OCI-LY7 (cell line): ENCODE measurements at regions of chr19 and their contacts with region 1.

Region 1: GRCh38 chr19:42465827-42466280 is 23.1 kb upstream of the CXCL17 start:
- DNase-seq: peak; percentile 90
- H3K4me3 ChIP-seq: peak overlapping the region; percentile 41
- H3K27ac ChIP-seq: peak overlapping the region; percentile 96
- H3K4me1 ChIP-seq: peaks cover 85% of the 10 kb centered on the region
- CTCF ChIP-seq: peak; percentile 77

Region 2: DNA sequence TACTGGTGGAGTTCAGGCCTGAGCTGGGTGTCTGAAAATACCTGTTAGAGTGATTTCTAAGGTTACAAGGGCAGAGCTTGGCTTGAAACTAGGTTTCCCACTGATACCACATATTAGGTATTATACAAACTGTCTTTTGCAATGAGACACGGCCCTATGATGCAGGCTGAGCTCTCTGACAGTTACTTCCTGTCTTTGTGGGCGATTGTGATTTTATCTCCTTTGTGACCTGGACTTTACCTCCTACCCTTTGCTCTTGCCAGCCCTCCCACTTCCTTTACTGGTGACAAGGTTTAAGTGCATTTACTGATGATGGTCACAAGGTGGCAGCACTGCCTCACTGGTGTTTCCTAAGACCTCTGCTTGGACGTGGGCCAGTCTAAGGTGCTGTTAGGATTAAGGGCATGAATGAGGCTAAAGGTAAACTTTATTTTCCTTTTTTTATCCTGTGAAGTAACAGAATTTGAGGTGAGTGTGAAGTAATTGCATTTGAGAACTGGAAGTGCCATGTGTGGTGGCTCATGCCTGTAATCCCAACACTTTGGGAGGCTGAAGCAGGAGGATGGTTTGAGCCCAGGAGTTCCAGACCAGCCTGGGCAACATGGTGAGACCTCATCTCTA is 15.4 kb before region 1 on chr19:
- CTCF ChIA-PET with region 1: interaction called, 3 read pairs
- POLR2A ChIA-PET with region 1: interaction called, 3 read pairs
- intact Hi-C with region 1: loop called (anchors 1 kb)
- DNase-seq: peak; percentile 90
- H3K4me3 ChIP-seq: no peak overlapping the region
- H3K27ac ChIP-seq: no peak overlapping the region
- H3K4me1 ChIP-seq: peaks cover 22% of the 10 kb centered on the region
- CTCF ChIP-seq: peak; percentile 96

Region 3: DNA sequence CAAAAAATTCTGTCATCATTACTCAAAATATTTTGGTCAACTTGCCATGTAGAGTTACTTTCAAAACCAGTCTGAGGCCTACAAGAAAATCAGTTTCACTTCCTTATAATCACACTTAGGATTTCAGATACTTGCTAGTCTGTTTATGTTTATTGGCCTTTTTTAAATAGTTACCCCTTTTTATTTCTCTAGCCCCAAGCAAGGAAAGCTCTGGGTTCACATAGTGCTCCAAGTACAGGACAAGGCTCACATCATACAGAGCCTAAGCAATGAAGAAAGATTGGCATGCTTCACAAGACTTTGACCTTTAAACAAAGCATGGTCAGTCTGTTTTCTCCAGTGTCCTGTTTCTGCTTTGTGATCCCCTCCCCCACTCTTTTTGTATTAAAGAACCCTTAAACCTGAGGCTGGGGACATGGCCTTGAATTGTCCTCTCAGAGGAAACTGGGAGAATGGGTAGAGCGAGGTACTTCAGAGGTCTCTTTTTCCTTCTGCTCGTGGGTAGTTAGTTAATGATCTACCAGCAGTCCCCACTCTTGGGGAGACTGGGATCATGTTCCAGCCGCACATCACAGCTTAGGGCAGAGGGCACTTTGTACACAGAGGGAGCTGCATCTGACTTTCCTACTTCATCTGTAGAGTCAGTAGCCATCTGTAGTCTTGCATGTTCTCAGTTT is 31.8 kb after region 1 on chr19:
- CTCF ChIA-PET with region 1: interaction called, 3 read pairs
- POLR2A ChIA-PET with region 1: interaction called, 7 read pairs
- intact Hi-C with region 1: loop called (anchors 1 kb)
- DNase-seq: peak; percentile 73
- H3K4me3 ChIP-seq: peak overlapping the region; percentile 52
- H3K27ac ChIP-seq: peak overlapping the region; percentile 80
- H3K4me1 ChIP-seq: peaks cover 35% of the 10 kb centered on the region
- CTCF ChIP-seq: no peak

Region 4: DNA sequence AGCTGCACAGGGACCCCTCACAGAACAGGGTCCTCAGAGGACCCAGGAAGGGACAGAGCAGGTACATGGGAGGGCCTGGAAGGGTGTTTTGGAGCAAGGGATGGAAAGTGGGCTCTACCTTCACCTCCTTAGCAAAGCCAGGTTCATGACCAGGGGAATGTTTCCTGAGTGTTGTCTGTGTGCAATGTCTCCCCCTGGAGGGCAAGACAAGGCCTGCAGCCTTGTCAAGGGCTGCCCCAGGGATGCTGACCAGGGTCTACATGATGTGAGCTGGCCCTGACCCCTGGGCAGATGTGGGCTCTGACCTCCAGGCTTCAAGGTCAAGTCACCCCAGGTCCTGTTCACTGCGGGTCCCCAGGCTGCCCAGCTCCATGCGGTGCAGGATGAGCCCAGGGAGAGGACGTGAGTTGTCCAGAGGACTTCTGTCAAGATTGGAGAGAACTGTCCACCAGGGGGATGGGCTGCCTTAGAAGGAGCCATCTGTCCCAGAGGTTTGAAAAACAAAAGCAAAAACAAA is 63.5 kb after region 1 on chr19:
- CTCF ChIA-PET with region 1: interaction called, 5 read pairs
- POLR2A ChIA-PET with region 1: interaction called, 7 read pairs
- intact Hi-C with region 1: loop called (anchors 1 kb)
- DNase-seq: peak; percentile 84
- H3K4me3 ChIP-seq: no peak overlapping the region
- H3K27ac ChIP-seq: peak overlapping the region; percentile 45
- H3K4me1 ChIP-seq: peaks cover 22% of the 10 kb centered on the region
- CTCF ChIP-seq: peak; percentile 94